Endothelial cell of umbilical vein (primary cell): ENCODE measurements at regions of chr3 and their contacts with region 1.

Region 1: DNA sequence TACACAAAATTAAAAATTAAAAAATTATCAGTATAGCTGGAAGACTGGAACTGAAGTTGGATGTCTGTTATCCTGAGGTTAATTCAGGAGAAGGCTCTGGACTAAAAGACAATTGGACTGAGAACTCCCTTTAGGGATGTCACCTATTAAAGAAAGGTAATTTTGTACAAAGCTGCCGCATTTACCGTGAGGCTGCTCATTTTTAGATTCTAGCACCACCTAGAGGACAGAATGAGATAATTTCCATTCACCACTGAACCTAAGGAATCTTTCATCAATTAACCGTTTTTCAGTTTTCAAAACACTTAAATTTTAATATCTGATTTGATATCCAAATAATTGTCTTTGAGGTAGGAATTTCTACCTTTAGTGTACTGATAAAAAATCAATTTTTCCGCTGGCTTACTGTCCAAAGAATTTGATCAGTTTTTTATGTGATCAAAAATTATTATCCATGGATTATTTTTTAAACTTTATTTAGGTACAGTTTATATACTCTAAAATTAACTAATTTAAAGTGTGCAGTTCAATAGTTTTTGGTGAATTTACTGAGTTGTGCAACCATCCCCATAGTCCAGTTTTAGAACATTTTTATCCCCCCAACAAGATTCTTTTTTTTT is 106.7 kb upstream of the TNIK start:
- DNase-seq: peak; percentile 55
- H3K4me3 ChIP-seq: no peak overlapping the region
- H3K27ac ChIP-seq: no peak overlapping the region
- H3K4me1 ChIP-seq: peaks cover 8% of the 10 kb centered on the region
- H3K27me3 ChIP-seq: peaks cover 0 to 2% of the 10 kb centered on the region in 2 experiments
- CTCF ChIP-seq: peak; percentile 40 to 46
- POLR2A ChIP-seq: no peak

Region 2: GRCh38 chr3:170961616-170962400 is 605.1 kb before region 1 on chr3:
- CTCF ChIA-PET with region 1: interaction called, 11 read pairs
- POLR2A ChIA-PET with region 1: no interaction called
- dilution Hi-C with region 1: no loop called
- intact Hi-C with region 1: loop called (anchors 1 kb)
- DNase-seq: peak; percentile 65
- H3K4me3 ChIP-seq: no peak overlapping the region
- H3K27ac ChIP-seq: no peak overlapping the region
- H3K4me1 ChIP-seq: no peaks in the 10 kb centered on the region
- H3K27me3 ChIP-seq: peaks cover 0 to 2% of the 10 kb centered on the region in 2 experiments
- CTCF ChIP-seq: peak; percentile 37 to 40
- POLR2A ChIP-seq: no peak

Region 3: GRCh38 chr3:170982733-170983132 is 584.2 kb before region 1 on chr3:
- CTCF ChIA-PET with region 1: no interaction called
- POLR2A ChIA-PET with region 1: no interaction called
- dilution Hi-C with region 1: no loop called
- intact Hi-C with region 1: no loop called
- DNase-seq: no peak
- H3K4me3 ChIP-seq: no peak overlapping the region
- H3K27ac ChIP-seq: no peak overlapping the region
- H3K4me1 ChIP-seq: no peaks in the 10 kb centered on the region
- H3K27me3 ChIP-seq: no peaks in the 10 kb centered on the region
- CTCF ChIP-seq: no peak
- POLR2A ChIP-seq: no peak

Region 4: DNA sequence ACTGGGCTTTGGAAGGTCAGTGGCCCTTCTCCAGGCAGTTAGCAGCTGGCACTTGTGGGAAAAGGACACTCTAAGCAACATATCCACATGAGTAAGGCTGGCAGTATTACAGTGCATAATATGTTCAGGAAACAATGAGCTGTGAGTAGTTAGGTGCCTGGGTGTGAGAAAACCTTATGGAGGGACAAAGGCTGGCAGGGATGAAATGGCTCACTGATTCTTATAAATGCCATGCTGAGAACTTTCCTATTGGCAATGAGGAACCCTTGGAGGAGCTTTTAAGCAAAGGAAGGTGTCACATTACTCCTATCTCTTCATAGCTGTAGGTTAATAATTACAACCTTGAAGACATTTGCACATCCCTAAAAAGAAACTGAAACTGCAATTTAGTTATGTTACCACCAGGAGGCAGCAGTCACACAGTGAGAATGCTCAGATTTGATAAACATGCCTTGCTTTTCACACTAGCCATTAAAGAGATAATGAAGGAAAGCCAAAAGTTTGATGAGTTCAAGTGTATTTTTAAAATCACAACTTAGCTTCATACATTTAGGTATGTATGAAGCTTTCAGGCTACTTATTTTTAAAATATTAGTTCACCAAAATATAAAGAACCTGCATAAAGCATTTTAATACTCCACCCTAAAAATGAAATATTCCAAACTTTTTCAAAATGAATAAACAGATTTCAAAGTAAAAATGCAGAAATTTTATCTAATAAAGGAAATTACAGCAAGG is 403.8 kb before region 1 on chr3:
- CTCF ChIA-PET with region 1: interaction called, 22 read pairs
- POLR2A ChIA-PET with region 1: no interaction called
- dilution Hi-C with region 1: no loop called
- intact Hi-C with region 1: loop called (anchors 1 kb)
- DNase-seq: no peak
- H3K4me3 ChIP-seq: no peak overlapping the region
- H3K27ac ChIP-seq: no peak overlapping the region
- H3K4me1 ChIP-seq: no peaks in the 10 kb centered on the region
- H3K27me3 ChIP-seq: no peaks in the 10 kb centered on the region
- CTCF ChIP-seq: peak; percentile 51 to 52
- POLR2A ChIP-seq: no peak

Region 5: GRCh38 chr3:171585029-171585428 is 18.1 kb after region 1 on chr3:
- CTCF ChIA-PET with region 1: no interaction called
- POLR2A ChIA-PET with region 1: no interaction called
- dilution Hi-C with region 1: no loop called
- intact Hi-C with region 1: no loop called
- DNase-seq: no peak
- H3K4me3 ChIP-seq: no peak overlapping the region
- H3K27ac ChIP-seq: no peak overlapping the region
- H3K4me1 ChIP-seq: no peaks in the 10 kb centered on the region
- H3K27me3 ChIP-seq: no peaks in the 10 kb centered on the region
- CTCF ChIP-seq: no peak
- POLR2A ChIP-seq: no peak